ENCODE measurements at regions of chr5 and their contacts with region 1.

Region 1: GRCh38 chr5:132829742-132830435 is 558 bp downstream of the SHROOM1 start:
- DNase-seq: peak; percentile 78
- ATAC-seq: peak; percentile 56
- H3K4me3 Mint-ChIP-seq: peak overlapping the region; percentile 74
- H3K27ac Mint-ChIP-seq: no peak overlapping the region
- H3K4me1 Mint-ChIP-seq: peaks cover 11% of the 10 kb centered on the region
- H3K27me3 Mint-ChIP-seq: peaks cover 78% of the 10 kb centered on the region
- CTCF ChIP-seq: peak; percentile 60; the same call in 1 of the 2 replicates

Region 2: DNA sequence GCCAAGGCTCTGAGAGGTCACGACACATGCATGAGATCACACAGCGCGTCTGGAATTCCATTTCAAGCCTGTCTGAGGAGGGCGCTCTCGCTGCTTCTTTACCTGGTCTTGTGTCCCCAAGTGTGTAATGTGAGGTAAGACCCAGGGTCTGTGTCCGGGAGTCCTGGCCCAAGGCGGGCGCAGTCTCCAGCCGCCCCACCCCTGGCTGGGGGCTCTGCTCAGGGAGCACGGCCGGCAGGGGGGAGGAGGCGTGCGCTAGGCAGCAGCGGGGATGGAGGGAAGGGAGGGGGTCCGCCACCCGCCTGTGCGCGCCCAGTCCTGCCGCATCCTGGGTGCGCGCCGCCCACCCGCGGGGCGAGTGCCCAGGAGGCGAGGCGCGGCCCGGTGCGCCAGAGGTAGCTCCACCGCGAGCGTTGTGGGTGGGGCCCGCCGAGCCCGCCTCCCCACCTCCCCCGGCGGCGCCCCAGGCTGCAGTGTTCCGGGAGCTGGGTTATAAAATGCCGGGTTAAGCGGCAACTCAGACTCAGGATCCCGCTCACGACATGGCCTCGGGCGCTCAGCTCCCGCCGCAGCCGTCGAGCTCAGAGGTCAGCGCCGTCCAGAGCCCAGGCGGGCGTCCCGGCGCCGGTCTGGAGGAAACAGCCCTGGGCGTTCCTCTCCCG is 82.8 kb before region 1 on chr5 and contains the start of gene CCNI2:
- CTCF ChIA-PET with region 1: interaction called, 16 read pairs
- POLR2A ChIA-PET with region 1: no interaction called
- DNase-seq: peak; percentile 73
- ATAC-seq: peak; percentile 81
- H3K4me3 Mint-ChIP-seq: peak within 1 kb of the TSS; percentile 59
- H3K27ac Mint-ChIP-seq: no peak within 1 kb of the TSS
- H3K4me1 Mint-ChIP-seq: peaks cover 4% of the 10 kb centered on the region; the same call in 1 of the 2 replicates
- H3K27me3 Mint-ChIP-seq: peaks cover 66% of the 10 kb centered on the region
- CTCF ChIP-seq: no peak
- total RNA-seq, gene CCNI2: 1.1 to 1.7 TPM (median 1.6 TPM) in 3 replicates

Region 3: DNA sequence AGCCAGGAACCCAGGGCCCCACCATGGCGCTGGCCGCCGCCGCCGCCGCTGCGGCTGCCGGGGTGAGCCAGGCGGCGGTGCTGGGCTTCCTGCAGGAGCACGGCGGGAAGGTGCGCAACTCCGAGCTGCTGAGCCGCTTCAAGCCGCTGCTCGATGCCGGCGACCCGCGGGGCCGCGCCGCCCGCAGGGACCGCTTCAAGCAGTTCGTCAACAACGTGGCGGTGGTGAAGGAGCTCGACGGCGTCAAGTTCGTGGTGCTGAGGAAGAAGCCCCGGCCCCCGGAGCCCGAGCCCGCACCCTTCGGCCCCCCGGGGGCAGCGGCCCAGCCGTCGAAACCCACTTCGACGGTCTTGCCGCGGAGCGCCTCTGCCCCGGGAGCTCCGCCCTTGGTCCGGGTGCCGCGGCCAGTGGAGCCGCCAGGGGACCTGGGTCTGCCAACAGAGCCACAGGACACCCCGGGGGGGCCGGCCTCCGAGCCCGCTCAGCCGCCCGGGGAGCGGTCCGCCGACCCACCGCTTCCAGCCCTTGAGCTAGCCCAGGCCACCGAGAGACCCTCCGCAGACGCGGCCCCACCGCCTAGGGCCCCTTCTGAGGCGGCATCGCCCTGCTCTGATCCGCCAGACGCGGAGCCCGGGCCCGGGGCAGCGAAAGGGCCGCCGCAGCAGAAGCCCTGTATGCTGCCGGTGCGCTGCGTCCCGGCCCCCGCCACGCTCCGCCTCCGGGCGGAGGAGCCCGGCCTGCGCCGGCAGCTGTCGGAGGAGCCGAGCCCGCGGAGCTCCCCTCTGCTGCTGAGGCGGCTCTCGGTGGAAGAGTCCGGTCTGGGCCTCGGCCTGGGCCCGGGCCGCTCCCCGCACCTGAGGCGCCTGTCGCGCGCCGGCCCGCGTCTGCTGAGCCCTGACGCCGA is 16.0 kb before region 1 on chr5:
- CTCF ChIA-PET with region 1: interaction called, 40 read pairs
- POLR2A ChIA-PET with region 1: interaction called, 3 read pairs
- DNase-seq: peak; percentile 68
- ATAC-seq: peak; percentile 83
- H3K4me3 Mint-ChIP-seq: peak overlapping the region; percentile 37; the same call in 1 of the 2 replicates
- H3K27ac Mint-ChIP-seq: no peak overlapping the region
- H3K4me1 Mint-ChIP-seq: peaks cover 9% of the 10 kb centered on the region
- H3K27me3 Mint-ChIP-seq: peaks cover 77% of the 10 kb centered on the region
- CTCF ChIP-seq: no peak

Region 4: GRCh38 chr5:132866342-132867045 is 36.6 kb after region 1 on chr5 and contains the starts of genes GDF9 and UQCRQ:
- CTCF ChIA-PET with region 1: interaction called, 7 read pairs
- POLR2A ChIA-PET with region 1: interaction called, 13 read pairs
- DNase-seq: peak; percentile 97
- ATAC-seq: peak; percentile 99
- H3K4me3 Mint-ChIP-seq: peak within 1 kb of the TSS; percentile 100
- H3K27ac Mint-ChIP-seq: peak within 1 kb of the TSS; percentile 100
- H3K4me1 Mint-ChIP-seq: peaks cover 22% of the 10 kb centered on the region
- H3K27me3 Mint-ChIP-seq: peaks cover 3% of the 10 kb centered on the region; the same call in 1 of the 2 replicates
- CTCF ChIP-seq: no peak
- total RNA-seq, gene GDF9: 0.34 to 0.42 TPM (median 0.37 TPM) in 3 replicates
- total RNA-seq, gene UQCRQ: 244 to 256 TPM (median 244 TPM) in 3 replicates

Region 5: GRCh38 chr5:132883261-132883834 is 53.5 kb after region 1 on chr5:
- CTCF ChIA-PET with region 1: interaction called, 13 read pairs
- POLR2A ChIA-PET with region 1: interaction called, 3 read pairs
- DNase-seq: peak; percentile 28
- ATAC-seq: peak; percentile 81
- H3K4me3 Mint-ChIP-seq: no peak overlapping the region
- H3K27ac Mint-ChIP-seq: no peak overlapping the region
- H3K4me1 Mint-ChIP-seq: no peaks in the 10 kb centered on the region
- H3K27me3 Mint-ChIP-seq: no peaks in the 10 kb centered on the region
- CTCF ChIP-seq: no peak

Measured in WTC11 (cell line).